ENCODE measurements at regions of chrX and their contacts with region 1.

Region 1: GRCh38 chrX:23699636-23700194 is 32.4 kb downstream of the PRDX4 start:
- ATAC-seq: no peak
- H3K4me3 ChIP-seq: no peak overlapping the region
- H3K27ac ChIP-seq: no peak overlapping the region
- H3K4me1 ChIP-seq: no peaks in the 10 kb centered on the region

Region 2: GRCh38 chrX:23540532-23540931 is 159.2 kb before region 1 on chrX:
- in situ Hi-C with region 1: no loop called
- ATAC-seq: no peak
- H3K4me3 ChIP-seq: no peak overlapping the region
- H3K27ac ChIP-seq: no peak overlapping the region
- H3K4me1 ChIP-seq: no peaks in the 10 kb centered on the region

Region 3: DNA sequence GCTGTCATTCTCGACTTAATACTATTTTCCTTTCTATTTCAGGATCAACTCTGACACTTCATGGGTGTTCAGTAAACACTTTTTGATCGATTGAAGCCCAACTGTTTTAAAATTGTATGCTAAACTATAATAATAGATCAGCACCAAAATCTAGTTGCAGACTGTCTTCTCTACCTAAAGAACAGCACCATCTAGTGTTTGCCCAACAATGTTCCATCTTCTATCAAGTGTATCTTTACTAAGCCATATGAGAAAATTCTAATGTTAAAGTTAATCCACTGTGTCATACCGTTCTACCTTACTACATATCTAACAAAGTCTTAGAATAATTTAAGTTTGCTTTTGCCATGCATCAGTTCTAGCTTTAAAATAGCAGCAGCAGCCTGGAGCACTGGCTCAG is 145.4 kb before region 1 on chrX:
- in situ Hi-C with region 1: no loop called
- ATAC-seq: peak in 4 of 8 experiments; percentile 20 to 57 (median 34)
- H3K4me3 ChIP-seq: no peak overlapping the region
- H3K27ac ChIP-seq: no peak overlapping the region
- H3K4me1 ChIP-seq: no peaks in the 10 kb centered on the region

Region 4: GRCh38 chrX:23871905-23872546 is 172.3 kb after region 1 on chrX:
- in situ Hi-C with region 1: loop called in 1 of 9 experiments (anchors 25 kb)
- ATAC-seq: no peak
- H3K4me3 ChIP-seq: no peak overlapping the region
- H3K27ac ChIP-seq: no peak overlapping the region
- H3K4me1 ChIP-seq: no peaks in the 10 kb centered on the region